MCF 10A (cell line): ENCODE measurements at regions of chr10 and their contacts with region 1.

Region 1: GRCh38 chr10:30241422-30242110 is 107.5 kb downstream of the MTPAP start:
- DNase-seq: no peak
- H3K4me3 Mint-ChIP-seq: no peak overlapping the region
- H3K27ac Mint-ChIP-seq: no peak overlapping the region
- H3K4me1 Mint-ChIP-seq: peaks cover 6% of the 10 kb centered on the region
- H3K27me3 Mint-ChIP-seq: no peaks in the 10 kb centered on the region
- CTCF ChIP-seq: no peak

Region 2: DNA sequence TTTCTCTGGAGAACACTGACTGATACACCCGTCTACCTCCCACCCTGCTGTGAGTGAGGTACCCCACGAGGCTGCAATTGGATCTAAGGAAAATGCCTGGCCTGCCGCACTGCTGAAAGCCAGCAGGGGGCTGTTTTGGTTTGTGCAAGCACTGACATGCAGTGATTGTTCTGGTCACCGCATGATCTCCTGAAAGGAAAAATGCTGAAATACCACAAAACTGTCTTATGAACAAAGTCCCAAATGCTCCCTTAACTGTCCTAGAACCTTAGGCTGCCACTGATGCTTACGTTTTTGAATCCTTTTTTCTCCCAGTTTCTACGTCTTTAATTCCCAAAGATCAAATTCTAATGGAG is 314.9 kb before region 1 on chr10:
- CTCF ChIA-PET with region 1: no interaction called
- POLR2A ChIA-PET with region 1: no interaction called
- intact Hi-C with region 1: loop called (anchors 1 kb)
- DNase-seq: peak; percentile 71
- H3K4me3 Mint-ChIP-seq: no peak overlapping the region
- H3K27ac Mint-ChIP-seq: peak overlapping the region; percentile 37
- H3K4me1 Mint-ChIP-seq: peaks cover 35% of the 10 kb centered on the region
- H3K27me3 Mint-ChIP-seq: no peaks in the 10 kb centered on the region
- CTCF ChIP-seq: peak; percentile 71

Region 3: GRCh38 chr10:30027057-30028005 is 214.2 kb before region 1 on chr10:
- CTCF ChIA-PET with region 1: interaction called, 7 read pairs
- POLR2A ChIA-PET with region 1: no interaction called
- intact Hi-C with region 1: loop called (anchors 1 kb)
- DNase-seq: peak; percentile 88
- H3K4me3 Mint-ChIP-seq: peak overlapping the region; percentile 70
- H3K27ac Mint-ChIP-seq: peak overlapping the region; percentile 21
- H3K4me1 Mint-ChIP-seq: peaks cover 7% of the 10 kb centered on the region
- H3K27me3 Mint-ChIP-seq: no peaks in the 10 kb centered on the region
- CTCF ChIP-seq: peak; percentile 62

Region 4: GRCh38 chr10:30151581-30152389 is 89.8 kb before region 1 on chr10:
- CTCF ChIA-PET with region 1: interaction called, 4 read pairs
- POLR2A ChIA-PET with region 1: no interaction called
- intact Hi-C with region 1: loop called (anchors 1 kb)
- DNase-seq: peak; percentile 73
- H3K4me3 Mint-ChIP-seq: no peak overlapping the region
- H3K27ac Mint-ChIP-seq: no peak overlapping the region
- H3K4me1 Mint-ChIP-seq: no peaks in the 10 kb centered on the region
- H3K27me3 Mint-ChIP-seq: peaks cover 51% of the 10 kb centered on the region
- CTCF ChIP-seq: no peak